GM10248 (cell line): ENCODE measurements at regions of chr2 and their contacts with region 1.

Region 1: GRCh38 chr2:10408649-10409579 is 39.2 kb downstream of the ODC1 start:
- DNase-seq: peak; percentile 88
- CTCF ChIP-seq: peak; percentile 93

Region 2: GRCh38 chr2:10079234-10079869 is 329.6 kb before region 1 on chr2:
- CTCF ChIA-PET with region 1: interaction called, 11 read pairs
- POLR2A ChIA-PET with region 1: no interaction called
- DNase-seq: peak; percentile 42
- CTCF ChIP-seq: no peak

Region 3: DNA sequence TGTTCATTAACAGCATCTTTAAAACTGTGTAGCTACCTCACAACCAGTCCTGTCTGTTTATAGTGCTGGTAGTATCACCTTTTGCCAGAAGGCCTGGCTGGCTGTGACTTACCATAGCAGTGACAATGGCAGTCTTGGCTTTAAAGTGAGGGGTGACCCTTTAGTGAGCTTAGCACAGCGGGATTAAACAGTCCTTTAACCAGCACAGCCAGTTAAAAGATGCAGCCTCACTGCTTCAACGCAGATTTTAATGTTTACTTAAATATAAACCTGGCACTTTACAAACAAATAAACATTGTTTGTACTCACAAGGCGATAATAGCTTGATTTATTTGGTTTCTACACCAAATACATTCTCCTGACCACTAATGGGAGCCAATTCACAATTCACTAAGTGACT is 279.4 kb before region 1 on chr2:
- CTCF ChIA-PET with region 1: interaction called, 73 read pairs
- POLR2A ChIA-PET with region 1: no interaction called
- DNase-seq: no peak
- CTCF ChIP-seq: no peak

Region 4: GRCh38 chr2:10267551-10268465 is 141.1 kb before region 1 on chr2:
- CTCF ChIA-PET with region 1: interaction called, 27 read pairs
- POLR2A ChIA-PET with region 1: no interaction called
- DNase-seq: no peak
- CTCF ChIP-seq: no peak

Region 5: DNA sequence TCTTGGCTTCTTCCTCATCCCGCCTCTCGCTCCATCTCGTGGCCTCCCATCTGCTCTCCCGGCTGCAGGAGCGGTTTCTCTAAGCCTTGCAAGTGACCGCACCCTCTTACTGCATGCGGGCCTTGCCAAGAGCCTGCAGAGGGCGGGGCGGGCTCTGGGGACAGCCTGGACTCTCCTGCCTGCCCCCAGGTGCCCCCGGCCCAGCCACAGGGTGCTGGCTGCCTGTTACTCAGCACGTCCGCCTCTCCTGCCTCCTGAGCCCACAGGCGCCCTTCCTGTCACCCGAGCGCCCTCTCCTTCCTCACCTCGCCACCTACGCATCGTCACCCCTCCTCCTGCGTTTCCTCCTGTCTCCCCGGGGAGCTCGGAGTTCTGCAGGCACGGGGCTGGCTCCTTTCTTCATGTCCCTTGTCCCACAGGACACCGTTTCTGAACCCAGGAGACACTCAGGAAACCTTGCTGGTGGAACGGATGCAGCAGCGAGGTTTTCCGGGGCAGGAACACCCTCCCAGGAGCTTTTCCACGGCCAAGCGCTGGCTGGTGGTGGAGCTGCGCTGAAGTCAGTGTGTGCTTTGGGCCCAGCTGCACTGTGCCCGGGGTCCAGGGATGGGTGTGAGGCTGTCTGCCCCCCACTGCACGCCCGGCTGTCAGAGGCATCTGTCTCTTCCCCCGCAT is 77.8 kb before region 1 on chr2:
- CTCF ChIA-PET with region 1: interaction called, 24 read pairs
- POLR2A ChIA-PET with region 1: no interaction called
- DNase-seq: peak; percentile 70
- CTCF ChIP-seq: no peak

Region 6: GRCh38 chr2:10448208-10448645 is 39.3 kb after region 1 on chr2 and contains the start of gene ODC1:
- CTCF ChIA-PET with region 1: interaction called, 41 read pairs
- POLR2A ChIA-PET with region 1: interaction called, 6 read pairs
- DNase-seq: peak; percentile 98
- CTCF ChIP-seq: no peak